Activated naive CD4-positive, alpha-beta T cell treated with anti-CD3 and anti-CD28 coated beads for 36 hours (primary cell): ENCODE measurements at regions of chr4 and their contacts with region 1.

Region 1: DNA sequence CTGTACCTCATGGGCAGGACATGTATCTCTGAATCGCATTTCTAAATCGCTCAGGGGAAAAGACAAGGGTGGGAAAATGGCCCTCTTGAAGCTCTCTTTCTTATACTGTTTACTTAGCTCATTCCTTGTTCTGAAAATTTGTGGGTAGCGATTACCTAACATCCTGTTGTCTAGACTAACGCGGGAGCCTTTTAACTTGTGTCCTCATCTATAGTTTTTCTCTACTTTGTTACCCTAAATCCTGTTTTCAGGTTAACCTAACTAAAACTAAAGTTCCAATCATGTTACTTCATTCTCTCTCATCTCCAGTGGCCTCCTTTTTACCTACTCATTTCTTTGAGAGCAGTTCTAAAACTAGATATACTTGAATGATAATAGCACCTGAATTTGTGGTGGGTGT is 45.0 kb downstream of the SNX25 start:
- DNase-seq: no peak
- H3K4me3 Mint-ChIP-seq: no peak overlapping the region
- H3K27ac Mint-ChIP-seq: peak overlapping the region; percentile 32
- H3K4me1 Mint-ChIP-seq: peaks cover 61% of the 10 kb centered on the region
- H3K27me3 Mint-ChIP-seq: no peaks in the 10 kb centered on the region

Region 2: GRCh38 chr4:184873054-184873453 is 381.4 kb before region 1 on chr4:
- CTCF ChIA-PET with region 1: no interaction called
- intact Hi-C with region 1: no loop called
- DNase-seq: no peak
- H3K4me3 Mint-ChIP-seq: no peak overlapping the region
- H3K27ac Mint-ChIP-seq: no peak overlapping the region
- H3K4me1 Mint-ChIP-seq: no peaks in the 10 kb centered on the region
- H3K27me3 Mint-ChIP-seq: no peaks in the 10 kb centered on the region

Region 3: GRCh38 chr4:185219551-185220344 is 34.7 kb before region 1 on chr4:
- CTCF ChIA-PET with region 1: interaction called, 3 read pairs
- intact Hi-C with region 1: loop called (anchors 1 kb)
- DNase-seq: no peak
- H3K4me3 Mint-ChIP-seq: no peak overlapping the region
- H3K27ac Mint-ChIP-seq: no peak overlapping the region
- H3K4me1 Mint-ChIP-seq: peaks cover 26% of the 10 kb centered on the region
- H3K27me3 Mint-ChIP-seq: no peaks in the 10 kb centered on the region